Calu3 (cell line): ENCODE measurements at regions of chr1 and their contacts with region 1.

Region 1: DNA sequence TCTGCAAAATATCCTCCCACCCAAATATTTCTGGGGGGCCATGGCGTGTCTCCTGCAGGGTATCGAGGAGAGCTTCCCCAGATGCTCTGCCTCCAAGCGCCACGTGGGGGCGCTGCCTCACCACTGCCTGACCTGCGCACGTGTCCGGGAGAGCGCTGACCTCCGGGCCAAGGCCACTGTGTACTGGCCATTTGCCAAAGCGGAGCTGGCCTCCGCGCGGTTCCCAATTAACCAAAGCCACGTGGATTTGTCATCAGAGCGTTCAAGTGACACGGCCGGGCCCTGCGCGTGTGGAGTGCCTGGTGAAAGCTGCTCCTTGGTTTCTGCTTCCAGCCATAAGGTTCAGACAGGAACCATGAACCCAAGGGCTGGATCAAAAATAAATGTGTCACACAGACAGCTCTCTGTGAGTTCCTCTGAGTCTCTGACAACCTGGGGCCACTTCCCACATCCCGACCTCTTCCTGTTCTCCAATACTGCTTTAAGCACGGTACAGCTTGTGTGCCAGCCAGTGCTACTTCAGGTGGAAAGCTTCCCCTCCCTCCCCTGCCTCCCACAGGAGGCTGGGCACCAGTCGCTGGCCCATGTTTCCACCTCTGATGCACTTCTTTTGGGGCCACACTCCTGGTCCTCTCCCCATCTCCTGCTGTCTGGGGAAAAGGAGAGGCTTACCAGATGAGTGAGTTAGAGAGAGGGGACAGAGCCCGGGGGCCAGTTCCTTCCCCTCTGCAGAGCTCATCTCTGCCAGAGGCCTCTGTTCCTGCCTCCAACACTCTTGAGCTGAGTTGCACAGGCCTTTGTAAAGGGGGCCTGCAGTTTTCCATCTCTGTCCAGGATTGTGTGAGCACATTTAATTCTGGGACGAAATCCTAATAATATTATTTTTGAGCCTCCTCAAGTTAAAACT is 26.1 kb downstream of the ZP4 start:
- DNase-seq: peak; percentile 85
- H3K4me3 Mint-ChIP-seq: peak overlapping the region; percentile 68
- H3K27ac Mint-ChIP-seq: peak overlapping the region; percentile 55
- H3K4me1 Mint-ChIP-seq: peaks cover 21% of the 10 kb centered on the region
- H3K27me3 Mint-ChIP-seq: no peaks in the 10 kb centered on the region
- CTCF ChIP-seq: peak; percentile 98

Region 2: DNA sequence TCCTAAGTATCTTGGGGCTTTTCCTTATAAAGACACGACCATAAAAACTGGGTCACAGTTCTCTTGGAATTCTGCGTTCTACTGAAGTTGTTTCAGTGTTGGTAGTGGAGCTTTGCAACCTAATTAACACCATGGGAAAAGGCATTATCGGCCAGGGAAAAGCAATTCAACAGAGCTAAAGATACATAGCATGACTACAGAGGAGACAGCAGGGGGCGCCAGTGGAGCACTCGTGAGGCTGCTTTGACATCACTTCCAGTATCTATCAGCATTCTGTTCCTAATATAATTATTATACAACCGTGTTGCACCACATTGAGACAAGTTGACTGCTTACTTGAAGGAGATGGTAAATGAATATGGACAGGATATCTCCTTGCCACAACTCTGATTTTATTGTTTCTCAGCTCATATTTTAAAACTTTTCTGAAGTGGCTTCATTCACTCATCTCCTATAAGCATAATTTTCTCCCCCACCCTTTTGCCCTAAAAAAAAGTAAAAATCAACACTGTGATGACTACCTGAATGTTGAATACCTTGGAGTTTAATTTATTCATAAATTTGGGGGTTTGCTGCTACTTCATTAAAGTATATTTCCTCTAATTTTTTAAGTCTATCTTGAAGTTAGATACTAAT is 13.3 kb before region 1 on chr1:
- CTCF ChIA-PET with region 1: interaction called, 11 read pairs
- intact Hi-C with region 1: no loop called
- DNase-seq: peak; percentile 84
- H3K4me3 Mint-ChIP-seq: no peak overlapping the region
- H3K27ac Mint-ChIP-seq: no peak overlapping the region
- H3K4me1 Mint-ChIP-seq: peaks cover 7% of the 10 kb centered on the region
- H3K27me3 Mint-ChIP-seq: no peaks in the 10 kb centered on the region
- CTCF ChIP-seq: no peak

Region 3: DNA sequence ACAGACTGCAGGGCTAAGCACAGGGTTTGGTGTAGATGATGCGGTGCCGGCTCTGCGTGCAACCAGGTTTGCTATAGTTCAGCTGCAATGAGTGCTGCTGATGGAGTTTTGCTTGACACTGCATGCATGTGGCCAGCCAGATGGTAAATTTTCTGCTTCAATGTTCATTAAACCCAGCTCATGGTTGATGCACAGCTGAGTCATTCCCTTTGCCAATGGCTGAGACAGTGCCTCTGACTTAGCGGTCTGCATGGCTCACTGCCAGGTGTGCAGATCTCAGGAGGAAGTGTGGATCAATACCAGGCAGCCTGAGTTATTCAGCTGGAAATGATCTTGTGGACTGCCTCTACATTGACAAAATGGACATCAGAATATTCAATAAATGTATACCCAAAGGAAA is 198.9 kb after region 1 on chr1:
- CTCF ChIA-PET with region 1: interaction called, 6 read pairs
- intact Hi-C with region 1: loop called (anchors 2 kb)
- DNase-seq: peak; percentile 86
- H3K4me3 Mint-ChIP-seq: no peak overlapping the region
- H3K27ac Mint-ChIP-seq: peak overlapping the region; percentile 63
- H3K4me1 Mint-ChIP-seq: peaks cover 42% of the 10 kb centered on the region
- H3K27me3 Mint-ChIP-seq: no peaks in the 10 kb centered on the region
- CTCF ChIP-seq: no peak

Region 4: DNA sequence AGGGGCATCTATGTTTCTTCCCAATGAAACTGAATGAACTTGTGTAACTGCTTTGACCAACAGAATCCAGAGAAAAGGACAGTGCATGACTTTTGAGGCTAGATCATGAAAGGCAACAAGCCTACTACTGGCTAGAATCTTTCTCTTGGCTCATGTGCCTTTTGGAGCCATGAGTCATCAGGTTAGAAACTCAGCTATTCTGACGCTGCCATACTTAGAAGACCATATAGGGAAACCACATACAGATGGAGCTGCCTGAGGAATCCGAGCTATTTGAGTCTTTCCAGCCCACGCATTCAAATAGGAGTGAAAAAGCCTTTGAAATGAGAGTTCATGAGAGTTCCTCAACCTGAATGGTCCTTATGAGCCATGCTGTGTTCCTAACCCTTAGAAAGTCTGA is 783.3 kb after region 1 on chr1:
- CTCF ChIA-PET with region 1: no interaction called
- intact Hi-C with region 1: loop called (anchors 5 kb)
- DNase-seq: peak; percentile 50
- H3K4me3 Mint-ChIP-seq: no peak overlapping the region
- H3K27ac Mint-ChIP-seq: peak overlapping the region; percentile 60
- H3K4me1 Mint-ChIP-seq: peaks cover 40% of the 10 kb centered on the region
- H3K27me3 Mint-ChIP-seq: no peaks in the 10 kb centered on the region
- CTCF ChIP-seq: no peak

Region 5: GRCh38 chr1:238727670-238728069 is 863.1 kb after region 1 on chr1:
- CTCF ChIA-PET with region 1: no interaction called
- intact Hi-C with region 1: no loop called
- DNase-seq: no peak
- H3K4me3 Mint-ChIP-seq: no peak overlapping the region
- H3K27ac Mint-ChIP-seq: no peak overlapping the region
- H3K4me1 Mint-ChIP-seq: no peaks in the 10 kb centered on the region
- H3K27me3 Mint-ChIP-seq: no peaks in the 10 kb centered on the region
- CTCF ChIP-seq: no peak

Region 6: DNA sequence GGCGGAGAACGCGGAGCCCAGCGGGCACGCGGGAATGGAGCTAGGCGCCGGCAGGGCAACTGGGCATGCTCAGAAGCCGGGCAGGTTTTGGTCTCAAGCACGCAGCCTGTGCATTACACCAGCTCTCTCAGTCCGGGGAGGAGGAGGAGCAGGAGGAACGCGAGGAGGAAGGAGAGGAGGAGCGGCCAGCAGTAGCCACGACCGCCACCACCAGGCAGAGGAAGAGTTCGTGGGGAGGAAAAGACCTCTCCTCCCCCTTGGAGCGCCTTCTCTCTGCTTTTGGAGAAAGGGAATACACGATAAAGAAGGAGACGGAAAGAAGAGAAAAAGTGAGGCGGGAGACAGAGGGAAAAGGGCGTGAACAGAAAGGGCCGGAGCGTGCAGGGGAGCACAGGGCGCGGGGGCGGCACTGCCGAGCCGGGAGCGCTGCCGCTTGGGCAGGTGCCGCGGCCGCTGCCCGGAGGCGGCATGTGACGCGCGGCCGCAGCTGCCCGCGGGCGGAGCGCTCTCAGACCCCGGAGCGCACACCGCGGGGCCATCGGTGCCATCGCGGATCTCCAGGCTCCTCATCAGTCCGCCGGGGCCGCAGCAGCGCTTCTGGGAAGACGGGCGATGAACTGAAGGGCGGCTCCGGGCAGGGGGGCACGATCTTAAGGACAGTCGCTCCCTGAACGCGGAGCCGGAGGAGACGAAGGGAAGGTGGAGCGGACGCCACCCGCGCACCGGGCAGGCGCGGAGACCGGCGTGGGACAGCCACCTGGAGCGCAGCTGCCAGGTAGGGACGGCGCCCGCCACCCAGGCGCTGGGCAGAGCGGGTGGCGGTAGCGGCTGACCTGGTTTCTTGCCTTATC is 1522.1 kb after region 1 on chr1 and contains the start of gene CHRM3:
- CTCF ChIA-PET with region 1: no interaction called
- intact Hi-C with region 1: loop called (anchors 10 kb)
- DNase-seq: peak; percentile 91
- H3K4me3 Mint-ChIP-seq: peak within 1 kb of the TSS; percentile 75
- H3K27ac Mint-ChIP-seq: peak within 1 kb of the TSS; percentile 52
- H3K4me1 Mint-ChIP-seq: peaks cover 10% of the 10 kb centered on the region
- H3K27me3 Mint-ChIP-seq: peaks cover 24% of the 10 kb centered on the region
- CTCF ChIP-seq: peak; percentile 36
- total RNA-seq, gene CHRM3: 2.3 and 2.6 TPM in 2 replicates